Heart right ventricle (tissue), 16 donors: ENCODE measurements at regions of chr12 and their contacts with region 1.

Region 1: GRCh38 chr12:100200463-100201181 is at the start of gene ACTR6:
- DNase-seq: peak; percentile 93 to 97
- ATAC-seq: peak; percentile 98 to 99 (median 99)
- H3K4me3 ChIP-seq: peak within 1 kb of the TSS; percentile 60 to 84 (median 72)
- H3K27ac ChIP-seq: peak within 1 kb of the TSS in 9 of 10 donors; percentile 59 to 85 (median 69)
- H3K4me1 ChIP-seq: peaks cover 0 to 31% (median 20%) of the 10 kb centered on the region in 9 donors
- H3K27me3 ChIP-seq: no peaks in the 10 kb centered on the region
- CTCF ChIP-seq: no peak
- total RNA-seq, gene ACTR6: 17.8 to 27.5 (median 19.8) TPM

Region 2: GRCh38 chr12:100061814-100062213 is 138.8 kb before region 1 on chr12:
- intact Hi-C with region 1: loop called in 1 of 10 experiments (anchors 10 kb)
- DNase-seq: no peak
- ATAC-seq: no peak
- H3K4me3 ChIP-seq: no peak overlapping the region
- H3K27ac ChIP-seq: no peak overlapping the region
- H3K4me1 ChIP-seq: no peaks in the 10 kb centered on the region
- H3K27me3 ChIP-seq: no peaks in the 10 kb centered on the region
- CTCF ChIP-seq: no peak

Region 3: DNA sequence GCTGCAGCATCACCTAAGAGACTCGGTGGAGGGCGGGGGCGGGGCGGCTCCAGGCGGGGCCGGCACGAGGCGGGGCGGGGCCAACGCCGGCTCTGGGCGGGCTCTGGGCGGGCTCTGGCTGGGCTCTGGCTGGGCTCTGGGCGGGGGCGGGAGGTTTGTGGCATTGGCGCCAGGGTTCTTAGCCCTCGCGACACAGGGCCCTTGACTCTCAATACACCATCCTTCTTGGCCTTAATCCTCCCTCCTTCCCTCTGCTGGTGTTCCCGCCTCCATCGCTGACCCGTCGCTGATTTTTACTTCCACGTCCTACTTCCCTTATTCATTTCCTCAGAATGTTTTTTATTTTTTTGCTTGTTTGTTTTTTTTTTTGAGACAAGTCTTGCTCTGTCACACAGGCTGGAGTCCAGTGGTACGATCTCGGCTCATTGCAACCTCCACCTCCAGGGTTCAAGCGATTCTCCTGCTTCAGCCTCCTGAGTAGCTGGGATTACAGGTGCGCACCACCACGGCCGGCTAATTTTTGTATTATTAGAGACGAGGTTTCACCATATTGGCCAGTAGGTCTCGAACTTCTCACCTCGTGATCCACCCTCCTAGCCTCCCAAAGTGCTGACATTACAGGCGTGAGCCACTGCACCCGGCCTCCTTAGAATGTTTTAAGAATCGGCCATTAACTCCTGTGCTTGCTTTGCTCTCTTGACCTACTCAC is 57.6 kb before region 1 on chr12 and contains the start of gene BLTP3B:
- intact Hi-C with region 1: loop called in 6 of 10 experiments (anchors 5 kb)
- DNase-seq: peak; percentile 93 to 94
- ATAC-seq: peak; percentile 98 to 100 (median 98)
- H3K4me3 ChIP-seq: peak within 1 kb of the TSS; percentile 73 to 98 (median 97)
- H3K27ac ChIP-seq: peak within 1 kb of the TSS; percentile 83 to 99 (median 97)
- H3K4me1 ChIP-seq: peaks cover 2 to 46% (median 26%) of the 10 kb centered on the region in 9 donors
- H3K27me3 ChIP-seq: no peaks in the 10 kb centered on the region
- CTCF ChIP-seq: no peak
- total RNA-seq, gene BLTP3B: 12.2 to 18.0 (median 15.2) TPM

Region 4: DNA sequence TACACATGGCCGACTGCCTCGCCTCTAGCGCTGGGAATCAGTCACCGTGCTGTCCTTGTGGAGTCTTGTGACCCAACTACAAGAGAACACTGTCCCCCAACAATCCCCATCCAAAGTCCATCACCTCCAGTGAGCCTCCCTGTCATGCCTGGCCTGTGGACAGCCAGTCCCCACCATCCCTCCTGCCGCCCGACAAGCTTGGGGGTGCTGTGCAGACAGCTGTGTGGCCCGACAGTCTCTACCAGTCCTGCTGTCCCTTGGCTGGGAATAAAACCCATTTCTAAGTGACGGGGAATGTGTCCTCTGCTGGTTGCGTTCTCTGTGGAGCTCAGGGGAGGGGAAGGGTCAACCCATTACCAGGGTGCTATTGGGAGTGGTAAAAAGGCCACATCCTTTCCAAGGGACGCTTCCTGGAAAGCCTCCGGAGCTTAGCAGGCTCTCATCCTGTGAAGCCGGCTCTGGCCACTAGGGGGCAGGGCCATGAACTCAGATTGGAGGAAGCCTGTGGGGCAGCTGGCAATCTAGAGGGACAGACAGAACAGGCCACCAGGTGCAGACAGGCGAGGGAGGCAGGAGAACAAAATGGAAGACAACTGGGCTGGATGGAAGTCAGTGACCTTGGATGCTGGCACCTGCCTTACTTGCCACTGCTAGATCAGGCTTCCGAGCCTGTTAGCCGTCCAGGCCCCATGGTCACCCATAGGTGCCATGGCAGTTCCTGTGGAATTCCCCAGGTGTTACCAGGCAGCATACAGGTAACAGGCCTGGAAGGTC is 46.0 kb before region 1 on chr12:
- intact Hi-C with region 1: loop called in 4 of 10 experiments (anchors 5 kb)
- DNase-seq: peak; percentile 69 to 77
- ATAC-seq: peak in 6 of 8 donors; percentile 56 to 78 (median 68)
- H3K4me3 ChIP-seq: no peak overlapping the region
- H3K27ac ChIP-seq: no peak overlapping the region
- H3K4me1 ChIP-seq: no peaks in the 10 kb centered on the region
- H3K27me3 ChIP-seq: no peaks in the 10 kb centered on the region
- CTCF ChIP-seq: peak; percentile 56 to 89 (median 78)

Region 5: DNA sequence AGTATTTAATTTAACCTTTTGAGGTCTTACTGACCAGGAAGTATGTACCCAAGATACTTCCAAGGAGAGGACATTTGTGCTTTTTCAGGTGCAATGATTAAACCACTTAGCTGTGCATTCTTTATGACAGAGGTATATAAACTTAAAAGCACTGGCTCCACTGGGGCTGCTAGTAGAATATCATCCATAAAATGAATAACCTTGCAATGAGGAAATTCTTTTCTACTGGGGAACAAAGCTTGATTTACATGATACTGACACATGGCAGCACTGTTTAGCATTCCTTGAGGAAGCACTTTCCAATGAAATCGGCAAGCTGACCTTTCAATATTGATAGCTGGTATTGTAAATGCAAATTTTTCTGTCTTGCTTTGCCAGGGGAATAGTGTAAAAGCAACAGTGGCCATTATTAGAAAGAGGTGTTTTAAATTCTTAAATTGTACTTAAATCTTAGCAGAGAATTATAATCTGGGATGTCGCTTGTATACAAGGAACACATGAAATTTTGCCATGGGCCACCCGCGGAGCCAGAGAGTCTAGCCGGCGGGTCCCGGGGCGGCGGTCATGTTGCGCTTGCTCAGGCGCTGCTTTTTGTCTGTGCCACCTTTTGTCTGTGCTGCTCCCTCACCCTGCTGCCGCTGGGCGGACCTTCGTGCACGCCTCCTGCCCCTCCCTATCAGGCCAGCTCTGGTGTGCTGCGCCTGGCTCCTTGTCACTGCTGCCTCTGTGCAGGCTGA is 37.0 kb before region 1 on chr12:
- intact Hi-C with region 1: loop called in 4 of 10 experiments (anchors 5 kb)
- DNase-seq: peak; percentile 75 to 82
- ATAC-seq: peak; percentile 96 to 100 (median 99)
- H3K4me3 ChIP-seq: peak overlapping the region in 7 of 10 donors; percentile 17 to 43 (median 36)
- H3K27ac ChIP-seq: peak overlapping the region in 1 of 10 donors; percentile 2
- H3K4me1 ChIP-seq: peaks cover 0 to 12% (median 9%) of the 10 kb centered on the region in 9 donors
- H3K27me3 ChIP-seq: no peaks in the 10 kb centered on the region
- CTCF ChIP-seq: peak in 5 of 9 donors; percentile 12 to 37 (median 30)

Region 6: GRCh38 chr12:100215209-100215608 is 14.6 kb after region 1 on chr12:
- intact Hi-C with region 1: no loop called
- DNase-seq: no peak
- ATAC-seq: no peak
- H3K4me3 ChIP-seq: no peak overlapping the region
- H3K27ac ChIP-seq: peak overlapping the region in 1 of 10 donors; percentile 8
- H3K4me1 ChIP-seq: no peaks in the 10 kb centered on the region
- H3K27me3 ChIP-seq: no peaks in the 10 kb centered on the region
- CTCF ChIP-seq: no peak

Region 7: DNA sequence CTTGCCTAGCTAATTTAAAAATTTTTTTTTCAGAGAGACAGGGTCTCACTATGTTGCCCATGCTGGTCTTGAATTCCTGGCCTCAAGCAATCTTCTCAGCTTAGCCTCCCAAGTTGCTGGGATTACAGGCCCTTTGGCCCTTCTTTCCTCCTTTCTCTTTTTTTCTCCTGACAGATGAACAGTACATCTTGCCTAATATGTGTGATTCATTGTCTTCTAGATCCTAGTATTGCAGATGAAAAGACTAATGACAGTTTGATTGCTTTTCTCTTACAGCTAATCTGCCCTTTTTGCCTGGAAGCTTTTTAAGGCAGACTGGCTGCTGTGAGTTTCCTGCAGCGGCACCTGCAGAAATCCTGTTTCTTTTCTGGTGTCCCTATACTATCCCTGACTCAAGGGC is 54.3 kb after region 1 on chr12:
- intact Hi-C with region 1: no loop called
- DNase-seq: no peak
- ATAC-seq: no peak
- H3K4me3 ChIP-seq: no peak overlapping the region
- H3K27ac ChIP-seq: no peak overlapping the region
- H3K4me1 ChIP-seq: no peaks in the 10 kb centered on the region
- H3K27me3 ChIP-seq: no peaks in the 10 kb centered on the region
- CTCF ChIP-seq: no peak

Region 8: DNA sequence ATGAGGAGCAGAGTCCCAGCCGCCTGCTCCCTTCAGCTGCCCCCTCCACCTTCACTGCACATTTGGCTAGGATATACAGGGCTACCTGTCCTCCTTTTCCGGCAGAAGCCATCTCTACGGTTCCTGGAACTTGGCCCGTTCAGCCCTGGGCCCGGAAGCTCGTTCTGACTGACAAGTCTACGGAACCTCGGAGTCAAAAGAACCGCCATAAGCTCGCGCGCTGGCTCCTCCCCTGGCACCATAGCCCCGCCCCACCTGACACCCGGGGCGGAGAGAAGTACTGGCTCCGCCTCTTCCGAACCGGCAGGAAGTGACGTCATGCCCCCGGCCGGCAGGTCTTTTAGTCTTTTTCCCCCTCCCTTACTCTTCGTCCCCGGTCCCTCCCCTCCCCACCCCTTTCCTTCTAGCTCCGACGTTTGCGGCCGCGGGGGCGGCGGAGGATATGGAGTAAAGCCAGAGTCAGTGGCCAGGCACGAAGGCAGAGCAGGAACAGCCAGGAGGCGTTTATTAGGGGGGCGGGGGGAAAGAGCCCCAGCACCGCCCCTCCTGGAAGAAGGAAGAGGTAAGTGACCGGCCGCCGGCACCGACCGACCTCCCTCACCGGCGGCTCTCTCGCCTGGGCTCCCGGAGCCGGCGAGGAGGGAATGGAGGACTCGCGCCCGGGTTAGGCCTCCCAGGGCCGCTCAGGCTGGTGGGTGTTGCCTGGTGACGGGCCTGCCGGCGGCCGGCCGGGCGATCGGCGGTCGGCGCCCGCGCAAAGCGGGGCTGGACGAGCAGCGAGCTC is 66.4 kb after region 1 on chr12 and contains the starts of genes DEPDC4 and SCYL2:
- intact Hi-C with region 1: loop called in 4 of 10 experiments (anchors 2 to 5 kb)
- DNase-seq: peak; percentile 94 to 95
- ATAC-seq: peak; percentile 96 to 99 (median 98)
- H3K4me3 ChIP-seq: peak within 1 kb of the TSS; percentile 69 to 97 (median 88)
- H3K27ac ChIP-seq: peak within 1 kb of the TSS; percentile 75 to 99 (median 96)
- H3K4me1 ChIP-seq: peaks cover 2 to 48% (median 36%) of the 10 kb centered on the region in 9 donors
- H3K27me3 ChIP-seq: no peaks in the 10 kb centered on the region
- CTCF ChIP-seq: peak in 3 of 9 donors; percentile 22 to 39 (median 38)
- total RNA-seq, gene DEPDC4: 0.47 to 2.0 (median 0.72) TPM
- total RNA-seq, gene SCYL2: 25.8 to 40.0 (median 32.9) TPM